Esophagus muscularis mucosa (tissue), 4 donors: ENCODE measurements at regions of chr2 and their contacts with region 1.

Region 1: GRCh38 chr2:18387441-18388206 is 172.8 kb downstream of the RDH14 start:
- DNase-seq: peak; percentile 97
- H3K4me3 ChIP-seq: no peak overlapping the region
- H3K27ac ChIP-seq: peak overlapping the region; percentile 63 to 79 (median 70)
- H3K4me1 ChIP-seq: peaks cover 0 to 26% (median 20%) of the 10 kb centered on the region in 4 donors
- H3K27me3 ChIP-seq: no peaks in the 10 kb centered on the region
- CTCF ChIP-seq: peak; percentile 92 to 98 (median 94)
- EP300 ChIP-seq: no peak
- POLR2A ChIP-seq: no peak

Region 2: DNA sequence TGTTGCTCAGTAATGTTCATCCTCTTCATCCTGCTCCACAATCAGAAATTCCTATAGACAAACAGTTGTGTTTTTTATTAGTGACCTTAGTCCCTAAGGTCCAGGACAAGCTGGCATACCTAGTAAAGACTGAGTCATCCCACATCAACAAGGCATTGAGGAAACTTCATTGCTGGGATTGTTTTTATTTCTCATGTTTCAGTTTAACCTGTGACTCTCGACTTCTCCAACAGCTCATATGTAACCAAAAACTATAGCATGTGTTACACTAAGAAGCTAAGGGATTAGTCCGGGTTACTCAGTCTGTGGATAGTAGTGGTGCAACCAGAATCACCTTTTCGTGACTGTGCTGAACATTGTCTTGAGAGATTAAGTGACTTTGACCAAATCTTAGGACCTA is 119.2 kb before region 1 on chr2:
- intact Hi-C with region 1: no loop called
- DNase-seq: no peak
- H3K4me3 ChIP-seq: no peak overlapping the region
- H3K27ac ChIP-seq: no peak overlapping the region
- H3K4me1 ChIP-seq: no peaks in the 10 kb centered on the region
- H3K27me3 ChIP-seq: no peaks in the 10 kb centered on the region
- CTCF ChIP-seq: no peak
- EP300 ChIP-seq: no peak
- POLR2A ChIP-seq: no peak

Region 3: GRCh38 chr2:19369341-19369955 is 981.8 kb after region 1 on chr2:
- intact Hi-C with region 1: loop called (anchors 5 kb)
- DNase-seq: peak; percentile 77
- H3K4me3 ChIP-seq: no peak overlapping the region
- H3K27ac ChIP-seq: no peak overlapping the region
- H3K4me1 ChIP-seq: no peaks in the 10 kb centered on the region
- H3K27me3 ChIP-seq: no peaks in the 10 kb centered on the region
- CTCF ChIP-seq: peak in 1 of 3 experiments; percentile 9
- EP300 ChIP-seq: no peak
- POLR2A ChIP-seq: no peak